PC-3 (cell line): ENCODE measurements at regions of chr13 and their contacts with region 1.

Region 1: GRCh38 chr13:52194184-52194868 is 34.9 kb upstream of the NEK3 start:
- DNase-seq: peak; percentile 74
- ATAC-seq: peak; percentile 80
- H3K4me3 ChIP-seq: peak overlapping the region; percentile 98
- H3K27ac ChIP-seq: peak overlapping the region; percentile 50
- H3K4me1 ChIP-seq: no peaks in the 10 kb centered on the region
- H3K27me3 ChIP-seq: no peaks in the 10 kb centered on the region
- CTCF ChIP-seq: no peak

Region 2: GRCh38 chr13:52011632-52012511 is 182.5 kb before region 1 on chr13 and contains the start of gene ALG11:
- CTCF ChIA-PET with region 1: no interaction called
- POLR2A ChIA-PET with region 1: no interaction called
- intact Hi-C with region 1: loop called (anchors 5 kb)
- DNase-seq: peak; percentile 97
- ATAC-seq: peak; percentile 97
- H3K4me3 ChIP-seq: peak within 1 kb of the TSS; percentile 90
- H3K27ac ChIP-seq: no peak within 1 kb of the TSS
- H3K4me1 ChIP-seq: peaks cover 7% of the 10 kb centered on the region
- H3K27me3 ChIP-seq: no peaks in the 10 kb centered on the region
- CTCF ChIP-seq: no peak
- total RNA-seq, gene ALG11: 7.3 and 9.0 TPM in 2 replicates

Region 3: GRCh38 chr13:52085421-52085820 is 108.9 kb before region 1 on chr13:
- CTCF ChIA-PET with region 1: no interaction called
- POLR2A ChIA-PET with region 1: no interaction called
- intact Hi-C with region 1: no loop called
- DNase-seq: no peak
- ATAC-seq: peak; percentile 42; the same call in 1 of the 2 replicates
- H3K4me3 ChIP-seq: no peak overlapping the region
- H3K27ac ChIP-seq: no peak overlapping the region
- H3K4me1 ChIP-seq: no peaks in the 10 kb centered on the region
- H3K27me3 ChIP-seq: no peaks in the 10 kb centered on the region
- CTCF ChIP-seq: no peak